Prostate gland (tissue), 2 donors: ENCODE measurements at regions of chr9 and their contacts with region 1.

Region 1: DNA sequence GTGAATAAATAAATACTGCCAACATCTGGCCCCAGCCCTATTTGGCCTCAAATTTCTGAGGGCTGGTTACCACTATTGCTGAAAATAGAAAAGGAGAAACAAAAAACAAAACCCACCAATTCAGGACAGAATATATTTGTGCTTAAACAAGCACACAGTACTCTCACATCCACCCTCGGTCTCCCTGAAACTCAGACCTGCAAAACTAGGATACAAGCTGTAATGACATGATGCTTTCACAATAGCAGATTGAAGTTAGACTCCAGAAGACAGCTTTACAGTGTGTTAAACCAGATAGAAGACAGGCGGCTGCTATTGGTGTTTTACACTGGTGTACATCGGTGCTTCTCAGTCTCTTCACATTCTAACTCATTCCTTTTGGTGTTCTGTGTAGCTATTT is 214.9 kb upstream of the DMRT1 start:
- DNase-seq: no peak
- H3K4me3 ChIP-seq: no peak overlapping the region
- H3K27ac ChIP-seq: peak overlapping the region; percentile 8 to 54
- H3K4me1 ChIP-seq: no peaks in the 10 kb centered on the region
- H3K27me3 ChIP-seq: no peaks in the 10 kb centered on the region
- CTCF ChIP-seq: no peak
- POLR2A ChIP-seq: no peak

Region 2: DNA sequence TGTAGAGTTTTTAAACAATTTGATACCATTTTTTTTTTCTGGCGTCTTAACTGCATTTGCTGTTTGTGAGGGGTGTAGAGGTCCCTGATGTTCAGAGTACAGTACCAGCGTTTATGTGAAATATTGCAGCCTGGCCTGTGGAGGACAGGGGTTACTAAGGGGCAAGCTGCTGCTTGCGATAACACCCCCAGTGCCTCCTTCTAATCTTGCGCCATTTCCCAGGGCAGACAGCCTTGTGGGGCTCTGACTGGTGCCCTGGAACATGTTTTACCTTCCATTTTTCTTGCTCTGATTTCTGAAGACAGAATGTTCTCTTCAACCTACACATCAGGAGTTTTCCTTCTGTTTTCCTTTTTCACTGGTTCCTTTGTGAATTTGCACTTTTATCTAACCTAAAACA is 269.0 kb before region 1 on chr9:
- intact Hi-C with region 1: no loop called
- DNase-seq: no peak
- H3K4me3 ChIP-seq: no peak overlapping the region
- H3K27ac ChIP-seq: no peak overlapping the region
- H3K4me1 ChIP-seq: no peaks in the 10 kb centered on the region
- H3K27me3 ChIP-seq: no peaks in the 10 kb centered on the region
- CTCF ChIP-seq: no peak
- POLR2A ChIP-seq: no peak

Region 3: GRCh38 chr9:663541-663940 is 36.9 kb after region 1 on chr9:
- intact Hi-C with region 1: no loop called
- DNase-seq: no peak
- H3K4me3 ChIP-seq: no peak overlapping the region
- H3K27ac ChIP-seq: no peak overlapping the region
- H3K4me1 ChIP-seq: no peaks in the 10 kb centered on the region
- H3K27me3 ChIP-seq: no peaks in the 10 kb centered on the region
- CTCF ChIP-seq: no peak
- POLR2A ChIP-seq: no peak

Region 4: DNA sequence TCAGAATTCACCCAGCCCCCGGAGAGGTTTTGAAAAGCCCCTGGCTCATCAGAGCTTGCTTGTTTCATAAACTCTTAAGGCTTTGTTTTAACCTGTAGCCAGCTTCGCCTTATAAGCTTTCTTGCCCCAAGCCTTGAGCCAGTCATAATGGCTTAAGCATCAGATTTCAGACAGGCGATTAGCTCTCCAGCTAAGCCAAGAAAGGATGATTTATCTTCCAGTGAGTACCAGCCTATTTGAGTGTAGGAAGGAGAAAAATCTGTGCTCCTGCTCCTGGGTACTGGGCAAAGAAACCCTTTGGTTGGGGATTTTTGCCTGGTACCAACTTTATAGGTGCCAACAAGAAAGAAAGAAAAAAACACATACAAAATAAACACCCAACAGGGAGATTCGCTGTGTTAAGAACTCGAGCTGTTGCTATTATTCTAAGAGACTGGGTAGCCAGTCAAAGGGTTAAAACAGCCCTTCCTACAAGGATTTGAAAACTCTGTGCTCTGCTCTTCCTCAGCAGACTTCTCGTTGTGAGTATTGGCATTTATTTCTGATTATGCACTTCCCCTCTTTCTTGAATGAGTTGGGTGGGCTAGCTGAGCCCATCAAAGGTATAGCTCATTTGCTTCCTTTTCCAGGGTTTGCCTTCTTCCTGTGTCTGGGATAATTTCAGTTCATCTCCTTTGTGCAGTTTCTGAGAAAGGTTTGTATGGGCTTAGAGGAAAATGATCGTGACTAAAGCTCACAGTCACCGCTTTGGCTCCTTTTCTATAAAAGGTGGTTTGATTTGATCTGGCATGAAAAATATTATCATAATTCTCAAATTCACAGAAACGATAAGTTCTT is 57.7 kb after region 1 on chr9:
- intact Hi-C with region 1: loop called (anchors 5 kb)
- DNase-seq: peak; percentile 43
- H3K4me3 ChIP-seq: peak overlapping the region; percentile 7 to 14
- H3K27ac ChIP-seq: peak overlapping the region; percentile 64 to 65
- H3K4me1 ChIP-seq: peaks cover 9% of the 10 kb centered on the region
- H3K27me3 ChIP-seq: no peaks in the 10 kb centered on the region
- CTCF ChIP-seq: no peak
- POLR2A ChIP-seq: peak; percentile 21